ENCODE measurements at regions of chr22 and their contacts with region 1.

Region 1: GRCh38 chr22:40679964-40680818 is 907 bp downstream of the MCHR1 start:
- DNase-seq: no peak
- H3K4me3 ChIP-seq: no peak overlapping the region
- H3K4me3 Mint-ChIP-seq: no peak overlapping the region
- H3K27ac ChIP-seq: no peak overlapping the region
- H3K27ac Mint-ChIP-seq: no peak overlapping the region
- H3K4me1 ChIP-seq: peaks cover 10% of the 10 kb centered on the region
- H3K4me1 Mint-ChIP-seq: peaks cover 6 to 19% (median 9%) of the 10 kb centered on the region in 4 donors
- H3K27me3 ChIP-seq: peaks cover 6% of the 10 kb centered on the region
- H3K27me3 Mint-ChIP-seq: peaks cover 6 to 9% of the 10 kb centered on the region in 2 donors

Region 2: DNA sequence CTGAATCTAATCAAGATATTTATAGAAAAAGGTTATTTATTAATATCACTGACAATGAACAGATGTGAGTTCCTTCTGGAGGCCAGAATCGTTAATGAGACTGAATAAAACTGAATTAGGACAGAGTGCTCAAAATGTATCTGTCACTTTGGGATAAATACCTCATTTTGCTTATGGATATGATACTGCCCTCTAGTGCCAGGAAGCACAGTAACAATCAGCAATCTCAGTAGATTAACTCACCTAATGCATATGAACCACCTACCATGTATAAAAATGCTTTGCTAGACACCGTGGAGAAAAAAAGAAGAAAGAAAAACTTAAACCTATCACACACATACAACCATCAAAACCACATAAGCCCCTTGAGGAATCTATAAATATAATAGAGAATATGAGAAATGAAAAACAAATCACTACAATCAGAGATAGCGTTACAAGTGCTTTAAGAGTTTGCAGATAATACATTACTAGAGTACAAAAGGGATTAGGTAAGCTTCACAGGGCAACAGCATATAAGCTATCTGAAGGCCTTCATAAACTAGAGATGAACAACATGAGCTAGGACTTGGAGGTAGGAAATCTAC is 192.4 kb before region 1 on chr22:
- CTCF ChIA-PET with region 1: no interaction called
- POLR2A ChIA-PET with region 1: no interaction called
- intact Hi-C with region 1: no loop called
- DNase-seq: peak in 4 of 5 donors; percentile 33 to 45 (median 42)
- H3K4me3 ChIP-seq: no peak overlapping the region
- H3K4me3 Mint-ChIP-seq: no peak overlapping the region
- H3K27ac ChIP-seq: no peak overlapping the region
- H3K27ac Mint-ChIP-seq: peak overlapping the region in 2 of 7 donors; percentile 7 to 48
- H3K4me1 ChIP-seq: peaks cover 30% of the 10 kb centered on the region
- H3K4me1 Mint-ChIP-seq: peaks cover 26 to 34% (median 33%) of the 10 kb centered on the region in 4 donors
- H3K27me3 ChIP-seq: no peaks in the 10 kb centered on the region
- H3K27me3 Mint-ChIP-seq: no peaks in the 10 kb centered on the region

Region 3: DNA sequence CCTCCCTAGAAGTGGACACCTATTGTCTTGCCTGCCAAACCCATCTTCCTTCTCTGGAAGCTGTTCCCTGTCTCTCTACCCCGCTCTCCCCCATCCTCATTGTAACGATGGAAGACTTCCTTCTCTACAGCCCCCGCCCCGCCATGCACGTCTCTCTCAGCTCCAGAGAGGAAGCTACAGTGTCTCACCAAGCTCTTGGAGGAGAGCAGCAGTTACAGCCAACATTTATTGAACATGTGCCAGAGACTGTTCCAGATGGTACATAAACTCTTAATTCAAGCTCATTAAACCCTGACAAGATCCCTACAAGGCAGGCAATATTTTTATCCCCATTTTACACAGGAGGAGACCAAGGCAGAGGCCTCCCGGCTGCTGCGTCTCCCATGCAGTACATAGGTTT is 14.2 kb after region 1 on chr22:
- CTCF ChIA-PET with region 1: interaction called, 26 read pairs
- POLR2A ChIA-PET with region 1: no interaction called
- intact Hi-C with region 1: no loop called
- DNase-seq: no peak
- H3K4me3 ChIP-seq: no peak overlapping the region
- H3K4me3 Mint-ChIP-seq: no peak overlapping the region
- H3K27ac ChIP-seq: no peak overlapping the region
- H3K27ac Mint-ChIP-seq: peak overlapping the region in 2 of 7 donors; percentile 19 to 25
- H3K4me1 ChIP-seq: no peaks in the 10 kb centered on the region
- H3K4me1 Mint-ChIP-seq: no peaks in the 10 kb centered on the region
- H3K27me3 ChIP-seq: no peaks in the 10 kb centered on the region
- H3K27me3 Mint-ChIP-seq: peaks cover 0 to 1% of the 10 kb centered on the region in 2 donors

Region 4: GRCh38 chr22:40728731-40729189 is 48.6 kb after region 1 on chr22:
- CTCF ChIA-PET with region 1: interaction called, 14 read pairs
- POLR2A ChIA-PET with region 1: interaction called, 10 read pairs
- intact Hi-C with region 1: loop called (anchors 1 kb)
- DNase-seq: peak; percentile 67 to 84 (median 76)
- H3K4me3 ChIP-seq: peak overlapping the region in 1 of 2 donors; percentile 17
- H3K4me3 Mint-ChIP-seq: peak overlapping the region; percentile 32 to 82 (median 73)
- H3K27ac ChIP-seq: peak overlapping the region; percentile 30
- H3K27ac Mint-ChIP-seq: peak overlapping the region; percentile 83 to 97 (median 95)
- H3K4me1 ChIP-seq: peaks cover 69% of the 10 kb centered on the region
- H3K4me1 Mint-ChIP-seq: peaks cover 35 to 63% (median 49%) of the 10 kb centered on the region in 4 donors
- H3K27me3 ChIP-seq: no peaks in the 10 kb centered on the region
- H3K27me3 Mint-ChIP-seq: no peaks in the 10 kb centered on the region

Region 5: GRCh38 chr22:40757071-40757470 is 76.9 kb after region 1 on chr22:
- CTCF ChIA-PET with region 1: no interaction called
- POLR2A ChIA-PET with region 1: interaction called, 63 read pairs
- intact Hi-C with region 1: loop called (anchors 1 kb)
- DNase-seq: no peak
- H3K4me3 ChIP-seq: no peak overlapping the region
- H3K4me3 Mint-ChIP-seq: no peak overlapping the region
- H3K27ac ChIP-seq: no peak overlapping the region
- H3K27ac Mint-ChIP-seq: no peak overlapping the region
- H3K4me1 ChIP-seq: no peaks in the 10 kb centered on the region
- H3K4me1 Mint-ChIP-seq: peaks cover 0 to 1% (median 0%) of the 10 kb centered on the region in 4 donors
- H3K27me3 ChIP-seq: no peaks in the 10 kb centered on the region
- H3K27me3 Mint-ChIP-seq: no peaks in the 10 kb centered on the region

Region 6: GRCh38 chr22:40803321-40803720 is 123.1 kb after region 1 on chr22:
- CTCF ChIA-PET with region 1: no interaction called
- POLR2A ChIA-PET with region 1: no interaction called
- intact Hi-C with region 1: no loop called
- DNase-seq: no peak
- H3K4me3 ChIP-seq: no peak overlapping the region
- H3K4me3 Mint-ChIP-seq: no peak overlapping the region
- H3K27ac ChIP-seq: no peak overlapping the region
- H3K27ac Mint-ChIP-seq: peak overlapping the region in 1 of 7 donors; percentile 13
- H3K4me1 ChIP-seq: no peaks in the 10 kb centered on the region
- H3K4me1 Mint-ChIP-seq: peaks cover 0 to 6% (median 3%) of the 10 kb centered on the region in 4 donors
- H3K27me3 ChIP-seq: no peaks in the 10 kb centered on the region
- H3K27me3 Mint-ChIP-seq: no peaks in the 10 kb centered on the region

Region 7: DNA sequence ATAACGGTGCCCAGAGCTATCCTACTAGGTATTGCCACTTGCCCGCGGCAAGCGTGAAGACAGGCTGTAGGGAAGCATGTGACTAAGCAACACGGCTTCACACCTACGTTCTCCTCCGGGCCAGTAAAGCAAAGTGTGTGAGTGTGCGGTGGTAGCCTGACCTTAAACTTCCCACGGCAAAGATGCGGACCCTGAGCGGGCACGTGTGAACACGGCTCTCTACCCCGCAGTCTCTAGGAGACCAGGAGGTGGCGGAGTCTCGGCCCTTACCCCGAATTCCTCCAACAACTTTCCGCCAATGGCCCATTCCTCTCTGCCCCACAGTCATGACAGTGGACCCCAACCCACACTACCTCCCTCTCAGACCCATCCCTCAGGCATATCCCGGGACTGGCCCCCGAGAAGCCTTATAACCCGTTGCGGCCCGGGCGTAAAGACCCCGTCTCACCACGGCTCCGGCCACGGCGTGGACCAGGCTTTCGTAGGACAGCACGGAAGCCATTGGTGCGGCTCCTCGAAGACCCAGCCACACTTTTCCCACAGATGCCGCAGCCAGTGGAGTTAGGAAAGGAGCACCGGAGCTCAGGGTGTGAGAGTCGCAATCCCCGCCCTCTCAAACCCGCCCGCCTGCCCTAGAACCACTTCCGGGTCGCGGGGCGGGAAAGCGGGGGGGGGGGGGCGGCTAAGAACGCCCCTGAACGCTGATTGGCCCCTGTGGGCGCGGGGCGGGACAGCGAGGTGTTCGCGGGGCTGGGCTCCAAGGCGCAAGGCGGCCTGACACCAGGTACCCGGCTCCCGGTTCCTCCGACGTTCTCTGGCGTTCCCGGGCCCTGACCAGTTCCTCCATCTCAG is 138.8 kb after region 1 on chr22 and contains the start of gene SLC25A17:
- CTCF ChIA-PET with region 1: interaction called, 20 read pairs
- POLR2A ChIA-PET with region 1: interaction called, 6 read pairs
- intact Hi-C with region 1: loop called (anchors 1 kb)
- DNase-seq: peak; percentile 81 to 84 (median 82)
- H3K4me3 ChIP-seq: peak within 1 kb of the TSS; percentile 92 to 95
- H3K4me3 Mint-ChIP-seq: peak within 1 kb of the TSS; percentile 92 to 99 (median 97)
- H3K27ac ChIP-seq: peak within 1 kb of the TSS; percentile 81
- H3K27ac Mint-ChIP-seq: peak within 1 kb of the TSS; percentile 82 to 98 (median 95)
- H3K4me1 ChIP-seq: peaks cover 27% of the 10 kb centered on the region
- H3K4me1 Mint-ChIP-seq: peaks cover 29 to 46% (median 36%) of the 10 kb centered on the region in 4 donors
- H3K27me3 ChIP-seq: no peaks in the 10 kb centered on the region
- H3K27me3 Mint-ChIP-seq: no peaks in the 10 kb centered on the region
- total RNA-seq, gene SLC25A17: 15.4 to 15.6 TPM

Region 8: DNA sequence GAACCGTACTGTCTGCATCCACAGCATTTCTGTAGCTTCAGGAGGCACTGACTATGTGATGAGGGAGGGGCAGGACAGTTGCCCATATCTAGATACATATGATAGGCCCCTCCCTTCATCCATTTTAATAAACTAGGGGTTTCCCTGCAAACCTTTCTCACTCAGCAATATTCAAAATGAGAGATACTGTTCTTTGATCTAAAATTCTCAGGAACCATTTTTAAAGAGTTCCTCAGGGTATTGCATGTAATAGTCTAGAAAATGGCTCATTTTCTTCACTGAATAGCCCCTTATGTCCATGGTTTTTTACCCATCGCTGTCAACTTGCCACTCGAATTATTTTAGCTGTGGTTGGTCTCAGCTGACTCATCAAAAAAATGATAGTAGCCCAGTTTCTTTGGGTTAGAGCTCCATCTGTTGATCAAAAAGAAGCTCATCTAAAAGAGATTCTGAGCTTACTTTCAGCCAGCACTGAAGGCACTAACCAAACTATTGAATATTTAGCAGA is 218.7 kb after region 1 on chr22:
- CTCF ChIA-PET with region 1: interaction called, 38 read pairs
- POLR2A ChIA-PET with region 1: no interaction called
- intact Hi-C with region 1: loop called (anchors 1 kb)
- DNase-seq: peak; percentile 41 to 54 (median 45)
- H3K4me3 ChIP-seq: no peak overlapping the region
- H3K4me3 Mint-ChIP-seq: peak overlapping the region in 2 of 8 donors; percentile 21 to 26
- H3K27ac ChIP-seq: no peak overlapping the region
- H3K27ac Mint-ChIP-seq: peak overlapping the region in 4 of 7 donors; percentile 1 to 67 (median 30)
- H3K4me1 ChIP-seq: peaks cover 4% of the 10 kb centered on the region
- H3K4me1 Mint-ChIP-seq: peaks cover 4 to 8% (median 7%) of the 10 kb centered on the region in 4 donors
- H3K27me3 ChIP-seq: no peaks in the 10 kb centered on the region
- H3K27me3 Mint-ChIP-seq: no peaks in the 10 kb centered on the region